H1 (cell line): ENCODE measurements at regions of chr20 and their contacts with region 1.

Region 1: DNA sequence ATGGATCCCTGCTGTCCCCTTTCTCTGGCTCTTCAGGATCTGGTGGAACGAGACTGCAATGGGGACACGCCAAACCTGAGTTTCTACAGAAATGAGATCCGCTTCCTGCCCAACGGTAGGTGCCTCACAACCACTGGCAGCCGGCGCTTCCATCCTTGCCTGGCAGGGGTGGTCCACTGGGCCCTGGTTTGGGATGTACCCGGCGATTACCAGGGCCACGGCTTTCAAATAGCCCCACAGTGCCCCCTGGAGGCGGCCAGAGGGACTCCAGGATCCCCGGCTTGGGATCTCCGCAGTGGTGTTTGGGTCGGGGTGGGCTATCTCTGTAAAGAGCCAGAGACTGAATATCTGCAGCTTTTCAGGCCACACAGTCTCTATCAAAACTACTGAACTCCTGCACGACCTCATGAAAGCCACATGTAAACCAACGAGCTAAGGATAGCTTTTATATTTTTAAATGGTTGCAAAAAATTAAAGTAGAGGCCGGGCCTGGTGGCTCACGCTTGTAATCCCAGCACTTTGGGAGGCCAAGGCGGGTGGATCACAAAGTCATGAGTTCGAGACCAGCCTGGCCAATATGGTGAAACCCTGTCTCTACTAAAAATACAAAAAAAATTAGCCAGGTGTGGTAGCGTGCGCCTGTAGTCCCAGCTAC is 3.7 kb downstream of the OGFR start:
- DNase-seq: peak in 1 of 2 experiments; percentile 97
- H3K4me3 ChIP-seq: no peak overlapping the region
- H3K27ac ChIP-seq: no peak overlapping the region
- H3K4me1 ChIP-seq: peaks cover 0 to 12% (median 8%) of the 10 kb centered on the region in 4 experiments; a peak in 6 of 7 replicates
- H3K27me3 ChIP-seq: peaks cover 0 to 6% (median 3%) of the 10 kb centered on the region in 4 experiments; a peak in 4 of 7 replicates
- CTCF ChIP-seq: peak; percentile 77 to 88 (median 84)
- EP300 ChIP-seq: no peak
- POLR2A ChIP-seq: no peak
- RAD21 ChIP-seq: peak; percentile 78 to 90

Region 2: GRCh38 chr20:62652051-62652926 is 156.0 kb before region 1 on chr20:
- CTCF ChIA-PET with region 1: interaction called, 11 read pairs
- POLR2A ChIA-PET with region 1: no interaction called
- DNase-seq: peak in 1 of 2 experiments; percentile 64
- H3K4me3 ChIP-seq: no peak overlapping the region
- H3K27ac ChIP-seq: no peak overlapping the region
- H3K4me1 ChIP-seq: peaks cover 0 to 14% (median 9%) of the 10 kb centered on the region in 4 experiments; a peak in 5 of 7 replicates
- H3K27me3 ChIP-seq: no peaks in the 10 kb centered on the region
- CTCF ChIP-seq: no peak
- EP300 ChIP-seq: no peak
- POLR2A ChIP-seq: no peak
- RAD21 ChIP-seq: no peak

Region 3: GRCh38 chr20:62668441-62669027 is 139.8 kb before region 1 on chr20:
- CTCF ChIA-PET with region 1: interaction called, 12 read pairs
- POLR2A ChIA-PET with region 1: no interaction called
- DNase-seq: peak; percentile 44 to 89
- H3K4me3 ChIP-seq: no peak overlapping the region
- H3K27ac ChIP-seq: no peak overlapping the region
- H3K4me1 ChIP-seq: no peaks in the 10 kb centered on the region
- H3K27me3 ChIP-seq: no peaks in the 10 kb centered on the region; a peak in 1 of 7 replicates
- CTCF ChIP-seq: peak; percentile 87 to 96 (median 94)
- EP300 ChIP-seq: no peak
- POLR2A ChIP-seq: no peak
- RAD21 ChIP-seq: peak; percentile 92 to 96

Region 4: GRCh38 chr20:62685781-62686555 is 122.4 kb before region 1 on chr20:
- CTCF ChIA-PET with region 1: interaction called, 13 read pairs
- POLR2A ChIA-PET with region 1: no interaction called
- DNase-seq: no peak
- H3K4me3 ChIP-seq: no peak overlapping the region
- H3K27ac ChIP-seq: no peak overlapping the region
- H3K4me1 ChIP-seq: peaks cover 0 to 3% (median 0%) of the 10 kb centered on the region in 4 experiments; a peak in 2 of 7 replicates
- H3K27me3 ChIP-seq: no peaks in the 10 kb centered on the region; a peak in 1 of 7 replicates
- CTCF ChIP-seq: no peak
- EP300 ChIP-seq: no peak
- POLR2A ChIP-seq: no peak
- RAD21 ChIP-seq: no peak

Region 5: DNA sequence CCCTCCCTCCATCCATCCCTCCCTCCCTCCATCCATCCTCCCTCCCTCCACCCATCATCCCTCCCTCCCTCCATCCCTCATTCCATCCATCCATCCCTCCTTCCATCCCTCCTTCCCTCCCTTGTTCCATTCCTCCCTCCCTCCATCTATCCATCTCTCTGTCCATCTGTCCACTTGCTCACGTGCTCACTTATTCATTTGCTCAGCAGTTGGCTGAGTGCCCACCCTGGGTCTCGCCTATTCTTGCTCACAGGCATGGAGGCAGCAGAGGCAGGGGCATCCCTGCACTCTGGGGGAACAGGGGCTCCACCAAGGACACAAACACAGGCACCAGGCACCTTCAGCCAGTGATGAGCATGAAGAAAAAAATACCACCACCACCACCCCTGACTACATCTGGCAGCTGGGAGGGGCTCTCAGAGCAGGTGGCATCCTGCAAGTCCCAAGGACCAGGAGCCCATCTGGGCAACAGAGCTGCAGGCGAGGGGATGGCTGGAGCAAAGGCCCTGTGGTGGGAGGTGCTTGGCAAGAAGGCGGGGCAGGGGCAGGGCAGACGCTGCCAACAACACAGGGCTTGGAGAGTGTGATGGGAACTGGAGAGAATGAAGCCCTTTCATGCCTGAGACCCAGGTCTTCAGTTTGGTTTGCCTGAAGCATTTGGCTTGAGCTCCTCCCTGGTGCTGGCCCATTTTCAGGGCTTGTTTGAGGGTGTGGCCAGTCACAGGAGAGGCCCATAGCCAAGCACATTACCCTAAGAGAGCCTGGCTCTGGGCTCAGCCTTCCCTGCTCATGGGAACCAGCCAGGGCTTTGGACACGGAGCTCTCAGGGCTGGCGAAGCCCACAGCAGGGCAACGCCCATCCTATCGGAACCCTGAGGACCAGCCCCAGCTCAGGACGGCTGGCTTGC is 52.3 kb before region 1 on chr20:
- CTCF ChIA-PET with region 1: no interaction called
- POLR2A ChIA-PET with region 1: no interaction called
- DNase-seq: no peak
- H3K4me3 ChIP-seq: no peak overlapping the region
- H3K27ac ChIP-seq: no peak overlapping the region
- H3K4me1 ChIP-seq: peaks cover 0 to 10% (median 6%) of the 10 kb centered on the region in 4 experiments; a peak in 5 of 7 replicates
- H3K27me3 ChIP-seq: no peaks in the 10 kb centered on the region; a peak in 2 of 7 replicates
- CTCF ChIP-seq: no peak
- EP300 ChIP-seq: no peak
- POLR2A ChIP-seq: no peak
- RAD21 ChIP-seq: no peak

Region 6: DNA sequence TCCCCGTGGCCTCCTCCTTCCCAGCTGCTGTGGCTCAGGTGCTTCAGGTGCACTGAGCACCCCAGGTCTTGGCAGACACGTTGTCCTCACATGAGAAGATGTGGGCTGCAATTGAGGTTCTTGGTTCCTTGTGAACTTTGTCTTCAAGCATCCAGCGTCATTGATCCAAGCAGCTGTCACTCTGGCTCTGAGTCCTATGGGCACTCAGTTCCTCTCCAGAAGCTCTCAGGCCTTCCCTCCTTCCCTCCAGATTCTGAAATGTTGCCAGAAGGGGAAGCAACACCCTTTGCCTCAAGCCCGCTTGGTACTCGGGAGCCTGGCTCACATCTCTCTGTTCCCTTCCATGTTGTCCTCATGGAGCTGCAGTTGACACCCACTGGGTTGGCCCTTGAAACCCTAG is 20.5 kb before region 1 on chr20:
- CTCF ChIA-PET with region 1: interaction called, 23 read pairs
- POLR2A ChIA-PET with region 1: interaction called, 3 read pairs
- DNase-seq: no peak
- H3K4me3 ChIP-seq: no peak overlapping the region
- H3K27ac ChIP-seq: no peak overlapping the region
- H3K4me1 ChIP-seq: peaks cover 0 to 2% (median 0%) of the 10 kb centered on the region in 4 experiments; a peak in 2 of 7 replicates
- H3K27me3 ChIP-seq: no peaks in the 10 kb centered on the region; a peak in 2 of 7 replicates
- CTCF ChIP-seq: no peak
- EP300 ChIP-seq: no peak
- POLR2A ChIP-seq: no peak
- RAD21 ChIP-seq: no peak

Region 7: DNA sequence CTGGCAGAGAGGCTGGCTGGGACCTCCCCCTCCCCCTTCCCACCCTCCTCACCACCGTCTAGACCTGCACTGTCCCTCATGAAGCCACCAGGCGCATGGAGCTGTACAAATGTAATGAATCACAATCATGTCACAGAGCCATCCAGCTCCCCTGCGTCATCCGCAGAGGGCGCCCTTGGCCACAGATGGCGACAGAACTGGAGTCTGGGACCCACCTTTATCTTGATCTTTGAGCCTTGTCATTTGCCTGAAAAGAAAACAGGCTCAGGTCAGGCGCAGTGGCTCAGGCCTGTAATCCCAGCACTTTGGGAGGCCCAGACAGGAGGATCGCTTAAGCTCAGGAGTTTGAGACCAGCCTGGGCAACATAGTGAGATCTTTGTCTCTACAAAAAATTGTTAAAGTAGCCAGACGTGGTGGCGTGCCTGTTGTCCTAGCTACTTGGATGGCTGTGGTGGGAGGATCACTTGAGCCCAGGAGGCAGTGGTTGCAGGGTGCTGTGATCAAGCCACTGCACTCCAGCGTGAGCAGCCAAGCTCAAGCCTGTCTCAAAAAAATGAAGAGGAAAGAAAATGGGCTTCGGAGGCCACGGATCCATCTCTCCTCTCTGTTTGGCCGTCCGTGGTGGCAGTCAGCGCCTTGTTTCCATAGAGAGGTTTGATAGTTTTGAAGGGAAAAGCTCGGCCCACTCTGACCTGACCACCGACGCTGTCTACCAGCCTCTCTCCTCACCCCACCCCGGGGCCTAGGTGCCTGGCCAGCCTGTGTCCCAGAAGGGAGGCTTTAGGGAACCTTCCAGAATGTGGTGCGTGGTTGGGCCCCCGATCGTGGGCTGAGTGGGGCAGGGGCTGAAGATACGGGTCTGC is 14.7 kb after region 1 on chr20:
- CTCF ChIA-PET with region 1: interaction called, 15 read pairs
- POLR2A ChIA-PET with region 1: interaction called, 8 read pairs
- DNase-seq: peak in 1 of 2 experiments; percentile 57
- H3K4me3 ChIP-seq: no peak overlapping the region
- H3K27ac ChIP-seq: no peak overlapping the region
- H3K4me1 ChIP-seq: peaks cover 0 to 19% (median 10%) of the 10 kb centered on the region in 4 experiments; a peak in 5 of 7 replicates
- H3K27me3 ChIP-seq: no peaks in the 10 kb centered on the region
- CTCF ChIP-seq: peak; percentile 66 to 70 (median 69)
- EP300 ChIP-seq: no peak
- POLR2A ChIP-seq: no peak
- RAD21 ChIP-seq: peak; percentile 67 to 75

Region 8: GRCh38 chr20:63056236-63056948 is 248.1 kb after region 1 on chr20:
- CTCF ChIA-PET with region 1: no interaction called
- POLR2A ChIA-PET with region 1: no interaction called
- DNase-seq: peak in 1 of 2 experiments; percentile 93
- H3K4me3 ChIP-seq: peak overlapping the region in 1 of 4 experiments; percentile 41; a peak in 1 of 8 replicates
- H3K27ac ChIP-seq: no peak overlapping the region
- H3K4me1 ChIP-seq: peaks cover 0 to 2% (median 0%) of the 10 kb centered on the region in 4 experiments; a peak in 2 of 7 replicates
- H3K27me3 ChIP-seq: no peaks in the 10 kb centered on the region; a peak in 2 of 7 replicates
- CTCF ChIP-seq: peak; percentile 67 to 94 (median 74)
- EP300 ChIP-seq: no peak
- POLR2A ChIP-seq: no peak
- RAD21 ChIP-seq: peak; percentile 70 to 85